HCT116 (cell line): ENCODE measurements at regions of chr4 and their contacts with region 1.

Region 1: DNA sequence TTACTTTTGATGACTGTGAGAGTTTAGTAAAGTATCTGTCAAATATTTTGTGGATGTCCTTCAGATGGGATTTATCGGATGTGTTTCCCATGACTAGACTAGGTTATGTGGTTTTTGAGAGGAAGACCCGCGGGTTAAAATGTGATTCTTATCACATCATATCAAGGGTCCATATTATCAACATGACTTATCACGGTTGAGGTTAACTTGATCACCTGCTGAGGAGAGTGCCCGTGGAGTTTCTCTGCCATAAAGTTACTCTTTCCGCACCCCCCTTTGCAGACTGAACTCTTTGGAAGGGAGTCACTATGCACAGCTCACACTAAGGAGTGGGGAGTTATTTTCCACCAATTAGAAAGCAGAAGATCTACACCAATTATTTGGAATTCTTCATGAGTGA is 38.7 kb downstream of the GLRB start:
- DNase-seq: no peak
- ATAC-seq: no peak
- H3K4me3 ChIP-seq: no peak overlapping the region
- H3K27ac ChIP-seq: no peak overlapping the region
- H3K4me1 ChIP-seq: peaks cover 0 to 8% of the 10 kb centered on the region in 2 experiments; a peak in 3 of 4 replicates
- H3K27me3 ChIP-seq: no peaks in the 10 kb centered on the region
- CTCF ChIP-seq: no peak
- POLR2A ChIP-seq: no peak
- RAD21 ChIP-seq: no peak

Region 2: GRCh38 chr4:157096439-157096838 is 18.2 kb before region 1 on chr4:
- CTCF ChIA-PET with region 1: no interaction called
- POLR2A ChIA-PET with region 1: no interaction called
- RAD21 ChIA-PET with region 1: interaction called in 1 of 2 experiments, 4 read pairs
- intact Hi-C with region 1: loop called (anchors 1 kb)
- DNase-seq: no peak
- ATAC-seq: no peak
- H3K4me3 ChIP-seq: no peak overlapping the region
- H3K27ac ChIP-seq: no peak overlapping the region
- H3K4me1 ChIP-seq: no peaks in the 10 kb centered on the region
- H3K27me3 ChIP-seq: no peaks in the 10 kb centered on the region
- CTCF ChIP-seq: no peak
- POLR2A ChIP-seq: no peak
- RAD21 ChIP-seq: no peak

Region 3: DNA sequence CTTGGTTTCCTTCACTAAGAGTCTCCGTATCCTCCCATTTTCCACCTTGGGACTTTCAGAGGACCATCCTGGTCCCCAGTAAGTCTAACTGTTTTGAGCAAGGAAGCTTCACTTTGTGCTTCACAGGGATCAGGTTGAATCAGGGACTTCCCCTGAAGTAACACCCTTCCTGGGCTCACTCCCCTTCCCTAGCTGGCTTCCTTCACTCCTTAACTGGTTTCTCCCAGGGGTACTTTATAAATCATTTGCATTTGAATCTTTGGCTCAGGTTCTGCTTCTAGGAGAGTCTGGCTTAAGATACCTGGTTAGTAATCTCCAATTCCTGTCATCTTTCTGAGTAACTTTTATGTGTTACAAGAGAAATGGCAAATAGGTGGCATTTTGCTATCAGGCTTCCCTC is 81.4 kb after region 1 on chr4:
- CTCF ChIA-PET with region 1: no interaction called
- POLR2A ChIA-PET with region 1: no interaction called
- RAD21 ChIA-PET with region 1: no interaction called
- intact Hi-C with region 1: no loop called
- DNase-seq: no peak
- ATAC-seq: no peak
- H3K4me3 ChIP-seq: no peak overlapping the region
- H3K27ac ChIP-seq: no peak overlapping the region
- H3K4me1 ChIP-seq: no peaks in the 10 kb centered on the region
- H3K27me3 ChIP-seq: no peaks in the 10 kb centered on the region
- CTCF ChIP-seq: no peak
- POLR2A ChIP-seq: no peak
- RAD21 ChIP-seq: no peak